ENCODE measurements at regions of chr14 and their contacts with region 1.

Region 1: DNA sequence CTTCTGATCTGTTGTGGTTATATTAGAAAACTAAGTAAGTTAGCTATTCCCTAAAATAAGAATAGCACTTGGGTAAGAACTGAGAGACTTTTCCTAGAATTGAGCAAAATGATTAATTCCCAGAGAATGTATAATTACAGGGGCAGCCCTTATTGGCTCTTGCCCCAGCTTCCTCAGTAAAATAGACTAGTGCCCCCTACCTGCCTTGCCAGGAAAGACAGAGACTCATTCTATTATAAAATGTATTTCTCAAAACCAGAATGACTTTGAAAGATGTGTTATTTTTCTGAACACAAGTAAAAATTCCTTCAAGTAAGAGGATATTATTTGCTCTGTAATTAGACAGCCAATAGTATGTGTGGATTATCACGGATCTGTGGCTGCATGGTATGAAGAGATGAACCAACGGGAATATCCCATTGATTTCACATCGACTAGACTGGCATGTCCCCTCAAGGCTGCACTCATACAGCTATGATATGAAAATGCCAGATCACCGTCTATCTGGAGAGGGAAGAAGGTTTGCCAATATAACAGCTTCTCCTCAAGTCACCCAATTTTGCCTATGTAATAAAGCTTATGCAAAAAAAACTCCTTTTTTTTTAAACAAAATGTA is 7.4 kb upstream of the GLRX5 start:
- DNase-seq: peak in 6 of 9 experiments; percentile 42 to 74 (median 60)
- ATAC-seq: peak; percentile 29
- H3K4me3 ChIP-seq: no peak overlapping the region
- H3K4me3 Mint-ChIP-seq: no peak overlapping the region
- H3K27ac ChIP-seq: no peak overlapping the region
- H3K27ac Mint-ChIP-seq: peak overlapping the region; percentile 61
- H3K4me1 ChIP-seq: peaks cover 52% of the 10 kb centered on the region
- H3K4me1 Mint-ChIP-seq: peaks cover 74% of the 10 kb centered on the region
- H3K27me3 ChIP-seq: no peaks in the 10 kb centered on the region
- H3K27me3 Mint-ChIP-seq: no peaks in the 10 kb centered on the region
- CTCF ChIP-seq: peak; percentile 86

Region 2: GRCh38 chr14:95431199-95432143 is 96.0 kb before region 1 on chr14:
- CTCF ChIA-PET with region 1: interaction called, 31 read pairs
- POLR2A ChIA-PET with region 1: no interaction called
- intact Hi-C with region 1: loop called in 1 of 2 experiments (anchors 1 kb)
- DNase-seq: peak in 1 of 9 experiments; percentile 20
- ATAC-seq: no peak
- H3K4me3 ChIP-seq: no peak overlapping the region
- H3K4me3 Mint-ChIP-seq: no peak overlapping the region
- H3K27ac ChIP-seq: no peak overlapping the region
- H3K27ac Mint-ChIP-seq: peak overlapping the region; percentile 37
- H3K4me1 ChIP-seq: no peaks in the 10 kb centered on the region
- H3K4me1 Mint-ChIP-seq: peaks cover 3% of the 10 kb centered on the region
- H3K27me3 ChIP-seq: no peaks in the 10 kb centered on the region
- H3K27me3 Mint-ChIP-seq: no peaks in the 10 kb centered on the region
- CTCF ChIP-seq: peak; percentile 12

Region 3: DNA sequence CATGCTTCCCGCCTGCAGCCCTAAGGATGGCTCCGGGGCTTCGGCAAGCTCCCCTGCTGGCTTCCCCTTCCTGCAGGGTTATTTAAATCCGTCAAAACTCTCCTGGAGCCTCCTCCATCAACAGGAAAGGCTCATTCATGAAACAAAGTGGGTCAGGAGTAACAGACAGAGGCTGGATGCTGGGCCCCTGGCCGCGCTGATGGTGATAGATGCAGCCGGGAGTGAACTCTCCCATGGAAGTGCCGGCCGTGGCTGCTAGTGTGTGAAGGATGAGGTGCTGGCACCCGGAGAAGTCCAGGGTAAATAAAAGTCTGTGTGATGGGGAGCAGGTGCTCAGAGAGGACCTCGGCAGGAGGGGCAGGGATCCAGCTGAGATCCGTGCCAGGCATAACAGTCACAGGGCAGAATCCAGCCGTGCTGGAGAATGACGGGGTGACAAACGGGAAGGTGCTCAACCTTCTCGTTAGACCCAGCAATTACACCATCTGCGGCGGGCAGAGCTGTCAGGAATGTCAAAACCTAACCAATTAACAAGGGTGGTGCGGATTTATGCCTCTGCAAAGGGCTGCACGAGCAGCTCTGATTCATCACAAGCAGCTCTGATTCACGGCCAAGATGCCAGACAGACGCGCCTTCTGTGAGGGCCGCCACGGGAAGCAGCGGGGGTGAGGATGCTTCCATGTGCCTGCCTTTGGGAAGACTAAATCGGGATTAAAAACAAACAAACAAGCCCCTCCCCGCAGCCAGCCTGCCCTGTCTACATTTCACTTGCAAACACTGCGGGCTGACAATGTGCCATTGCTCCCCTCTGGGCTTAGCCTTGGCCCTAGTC is 66.6 kb before region 1 on chr14:
- CTCF ChIA-PET with region 1: interaction called, 532 read pairs
- POLR2A ChIA-PET with region 1: interaction called, 16 read pairs
- intact Hi-C with region 1: no loop called
- DNase-seq: no peak
- ATAC-seq: no peak
- H3K4me3 ChIP-seq: no peak overlapping the region
- H3K4me3 Mint-ChIP-seq: no peak overlapping the region
- H3K27ac ChIP-seq: no peak overlapping the region
- H3K27ac Mint-ChIP-seq: peak overlapping the region; percentile 98
- H3K4me1 ChIP-seq: peaks cover 46% of the 10 kb centered on the region
- H3K4me1 Mint-ChIP-seq: peaks cover 48% of the 10 kb centered on the region
- H3K27me3 ChIP-seq: no peaks in the 10 kb centered on the region
- H3K27me3 Mint-ChIP-seq: no peaks in the 10 kb centered on the region
- CTCF ChIP-seq: no peak

Region 4: DNA sequence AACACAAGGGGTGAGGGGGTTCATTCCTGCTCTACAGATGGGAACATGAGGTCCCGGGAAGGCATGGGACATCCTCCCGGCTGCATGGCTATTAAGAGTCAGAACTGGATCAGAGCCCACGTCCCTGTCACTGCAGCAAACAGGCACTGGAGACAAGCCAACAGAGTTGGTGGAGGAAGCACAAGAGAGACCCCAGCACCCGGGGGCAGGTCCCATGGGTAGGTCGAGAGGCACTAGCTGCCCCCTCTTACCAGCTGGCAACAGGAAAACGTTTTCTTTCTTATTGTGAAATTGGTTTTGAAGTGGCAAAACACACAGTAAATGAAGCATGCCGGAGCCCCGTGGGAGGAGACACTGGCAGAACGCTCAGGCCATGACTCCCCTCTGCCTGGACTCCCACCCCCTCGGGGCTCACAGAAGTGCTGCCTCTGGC is 54.7 kb before region 1 on chr14:
- CTCF ChIA-PET with region 1: interaction called, 194 read pairs
- POLR2A ChIA-PET with region 1: no interaction called
- intact Hi-C with region 1: no loop called
- DNase-seq: peak in 1 of 9 experiments; percentile 11
- ATAC-seq: peak; percentile 26
- H3K4me3 ChIP-seq: peak overlapping the region in 1 of 2 experiments; percentile 18
- H3K4me3 Mint-ChIP-seq: peak overlapping the region; percentile 46
- H3K27ac ChIP-seq: peak overlapping the region; percentile 10 to 54
- H3K27ac Mint-ChIP-seq: peak overlapping the region; percentile 94
- H3K4me1 ChIP-seq: peaks cover 27% of the 10 kb centered on the region
- H3K4me1 Mint-ChIP-seq: peaks cover 53% of the 10 kb centered on the region
- H3K27me3 ChIP-seq: no peaks in the 10 kb centered on the region
- H3K27me3 Mint-ChIP-seq: no peaks in the 10 kb centered on the region
- CTCF ChIP-seq: no peak

Region 5: GRCh38 chr14:95493503-95493902 is 34.0 kb before region 1 on chr14:
- CTCF ChIA-PET with region 1: interaction called, 10 read pairs
- POLR2A ChIA-PET with region 1: interaction called, 8 read pairs
- intact Hi-C with region 1: no loop called
- DNase-seq: no peak
- ATAC-seq: no peak
- H3K4me3 ChIP-seq: no peak overlapping the region
- H3K4me3 Mint-ChIP-seq: no peak overlapping the region
- H3K27ac ChIP-seq: no peak overlapping the region
- H3K27ac Mint-ChIP-seq: peak overlapping the region; percentile 52
- H3K4me1 ChIP-seq: peaks cover 28% of the 10 kb centered on the region
- H3K4me1 Mint-ChIP-seq: peaks cover 49% of the 10 kb centered on the region
- H3K27me3 ChIP-seq: no peaks in the 10 kb centered on the region
- H3K27me3 Mint-ChIP-seq: no peaks in the 10 kb centered on the region
- CTCF ChIP-seq: no peak

Region 6: DNA sequence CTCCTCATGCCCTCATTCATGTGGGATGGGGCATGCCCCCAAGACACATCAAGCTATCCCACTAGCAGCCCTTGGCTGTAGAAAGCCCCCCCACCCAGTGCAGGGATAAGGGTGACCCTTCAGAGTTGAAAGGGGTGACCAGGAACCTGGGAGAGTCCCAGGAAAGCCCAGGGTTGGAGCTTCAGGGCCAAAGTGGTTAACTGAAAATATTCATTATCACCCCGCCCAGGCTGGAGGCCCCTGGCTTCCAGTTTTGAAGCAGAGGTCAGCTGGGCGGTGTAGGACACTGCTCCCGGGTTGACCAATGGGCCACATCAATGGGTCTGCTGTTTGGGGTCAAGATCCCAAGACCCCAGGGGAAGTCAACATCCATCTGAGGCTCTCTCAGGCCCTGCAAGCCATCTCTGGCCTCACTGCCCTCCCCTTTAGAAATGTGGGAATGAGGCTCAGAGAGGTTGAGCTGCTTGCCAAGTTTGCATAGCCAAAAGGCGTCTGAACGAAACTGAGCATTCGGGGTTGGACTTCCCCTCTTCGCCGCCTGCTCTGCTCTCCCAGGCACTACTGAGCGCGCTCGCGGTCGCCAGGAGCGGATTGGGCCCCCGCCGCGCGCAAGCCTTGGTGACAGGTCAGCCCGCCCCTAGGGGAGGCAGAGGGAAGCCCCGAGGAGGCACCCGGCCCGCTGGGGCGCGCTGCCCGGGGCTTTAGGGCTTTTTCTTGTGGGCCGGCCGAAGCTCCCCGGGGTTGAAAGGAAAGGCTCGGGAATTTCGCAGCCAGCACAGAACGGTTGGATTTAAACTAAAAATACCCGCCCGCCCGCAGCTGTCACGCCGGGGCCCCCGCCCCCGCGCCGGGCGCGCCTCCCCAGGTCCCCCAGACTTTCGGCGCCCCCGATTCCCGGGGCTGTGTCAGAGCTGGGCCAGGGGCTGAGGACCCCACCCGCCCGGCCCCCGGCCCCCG is 11.6 kb before region 1 on chr14:
- CTCF ChIA-PET with region 1: interaction called, 45 read pairs
- POLR2A ChIA-PET with region 1: interaction called, 9 read pairs
- intact Hi-C with region 1: loop called in 1 of 2 experiments (anchors 1 kb)
- DNase-seq: peak; percentile 62 to 94 (median 84)
- ATAC-seq: peak; percentile 85
- H3K4me3 ChIP-seq: peak overlapping the region; percentile 65 to 79
- H3K4me3 Mint-ChIP-seq: peak overlapping the region; percentile 89
- H3K27ac ChIP-seq: peak overlapping the region; percentile 59 to 64
- H3K27ac Mint-ChIP-seq: peak overlapping the region; percentile 93
- H3K4me1 ChIP-seq: peaks cover 66% of the 10 kb centered on the region
- H3K4me1 Mint-ChIP-seq: peaks cover 70% of the 10 kb centered on the region
- H3K27me3 ChIP-seq: no peaks in the 10 kb centered on the region
- H3K27me3 Mint-ChIP-seq: no peaks in the 10 kb centered on the region
- CTCF ChIP-seq: peak; percentile 46

Measured in CD8-positive, alpha-beta T cell (primary cell).